ENCODE measurements at regions of chr10 and their contacts with region 1.

Region 1: DNA sequence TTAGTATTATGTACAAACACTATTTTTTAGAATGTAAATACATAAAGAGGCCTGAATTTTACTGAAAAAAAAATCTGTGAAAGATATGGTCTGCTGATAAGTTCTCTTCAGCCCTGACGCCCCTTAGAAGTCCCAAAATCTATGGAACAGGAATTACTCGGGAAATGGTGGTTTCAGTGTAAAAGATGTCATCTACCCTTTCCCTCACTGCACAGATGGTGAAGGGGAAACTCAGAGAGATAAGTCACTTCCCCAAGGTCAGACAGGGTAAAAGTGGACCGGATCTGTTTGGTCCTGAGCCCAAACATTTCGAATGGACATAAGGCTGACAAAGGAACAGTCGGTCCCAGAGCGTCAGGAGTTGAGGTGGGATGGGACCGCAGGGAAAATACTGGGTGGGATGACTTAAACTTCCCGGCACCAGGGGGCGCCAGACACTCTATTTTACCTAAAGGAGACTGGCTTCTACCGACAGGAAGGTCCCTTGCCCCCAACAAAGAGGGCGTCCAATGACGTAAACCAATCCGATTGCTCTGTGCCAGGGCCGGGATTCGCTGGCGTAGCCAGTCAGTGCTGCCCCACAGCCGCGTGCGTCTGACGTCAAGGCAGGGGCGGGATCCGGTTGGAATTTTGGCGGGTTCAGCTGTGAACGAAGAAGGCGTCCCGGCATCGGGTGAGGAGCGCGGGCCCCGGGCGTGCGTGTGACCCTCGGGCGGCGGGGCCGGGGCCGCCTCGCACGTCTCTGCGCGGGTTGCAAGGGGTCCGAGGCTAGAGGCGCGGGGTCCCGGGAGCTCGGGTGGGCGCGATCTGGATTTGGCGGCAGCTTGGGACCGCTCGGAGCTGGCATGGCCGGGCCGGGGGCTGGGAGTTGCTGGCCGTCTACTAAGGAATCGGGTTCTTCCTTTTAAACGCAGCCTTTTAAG is at the start of gene MCM10:
- DNase-seq: peak; percentile 92 to 99 (median 97)
- ATAC-seq: peak; percentile 100
- H3K4me3 ChIP-seq: peak within 1 kb of the TSS; percentile 41 to 42
- H3K4me3 Mint-ChIP-seq: peak within 1 kb of the TSS; percentile 79 to 85 (median 82)
- H3K27ac ChIP-seq: peak within 1 kb of the TSS; percentile 44
- H3K27ac Mint-ChIP-seq: peak within 1 kb of the TSS; percentile 17 to 41
- H3K4me1 ChIP-seq: peaks cover 0 to 14% of the 10 kb centered on the region in 2 experiments
- H3K4me1 Mint-ChIP-seq: peaks cover 16 to 33% (median 22%) of the 10 kb centered on the region in 3 donors
- H3K27me3 ChIP-seq: peaks cover 0 to 3% of the 10 kb centered on the region in 2 experiments
- H3K27me3 Mint-ChIP-seq: no peaks in the 10 kb centered on the region
- total RNA-seq, gene MCM10: 0.65 to 1.4 (median 0.82) TPM

Region 2: DNA sequence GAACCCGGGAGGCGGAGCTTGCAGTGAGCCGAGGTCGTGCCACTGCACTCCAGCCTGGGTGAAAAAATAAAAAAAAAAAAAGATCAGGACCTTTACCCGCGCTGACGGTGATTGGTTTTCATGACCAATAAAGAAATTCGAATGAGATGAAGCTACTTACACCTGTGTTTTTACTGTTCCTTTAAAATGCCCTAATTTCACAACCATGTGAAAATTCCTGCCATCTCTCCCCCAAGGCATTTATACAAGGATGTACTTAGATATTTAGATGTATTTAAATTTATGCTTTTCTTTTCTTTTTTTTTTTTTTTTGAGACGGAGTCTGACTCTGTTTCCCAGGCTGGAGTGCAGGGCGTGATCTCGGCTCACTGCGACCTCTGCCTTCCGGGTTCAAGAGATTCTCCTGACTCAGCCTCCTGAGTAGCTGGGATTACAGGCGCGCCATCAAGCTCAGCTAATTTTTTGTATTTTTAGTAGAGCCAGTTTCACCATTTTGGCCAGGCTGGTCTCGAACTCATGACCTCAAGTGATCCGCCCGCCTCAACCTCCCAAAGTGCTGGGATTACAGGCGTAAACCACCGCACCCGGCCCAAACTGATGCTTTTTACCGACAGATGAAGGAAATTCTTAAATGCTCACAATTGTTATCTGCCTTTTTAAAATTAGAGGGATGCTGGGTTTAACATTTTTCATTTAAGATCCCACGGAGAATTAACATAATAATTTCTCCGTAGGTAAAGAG is 141.8 kb after region 1 on chr10:
- CTCF ChIA-PET with region 1: interaction called in 1 of 2 experiments, 33 read pairs
- POLR2A ChIA-PET with region 1: interaction called, 3 read pairs
- DNase-seq: peak in 1 of 35 experiments; percentile 16
- ATAC-seq: no peak
- H3K4me3 ChIP-seq: peak overlapping the region in 1 of 2 donors; percentile 75
- H3K4me3 Mint-ChIP-seq: peak overlapping the region; percentile 86 to 89 (median 88)
- H3K27ac ChIP-seq: peak overlapping the region; percentile 100
- H3K27ac Mint-ChIP-seq: peak overlapping the region; percentile 98 to 99
- H3K4me1 ChIP-seq: peaks cover 6 to 28% of the 10 kb centered on the region in 2 experiments
- H3K4me1 Mint-ChIP-seq: peaks cover 22 to 30% (median 29%) of the 10 kb centered on the region in 3 donors
- H3K27me3 ChIP-seq: no peaks in the 10 kb centered on the region
- H3K27me3 Mint-ChIP-seq: no peaks in the 10 kb centered on the region

Measured in T-cell (primary cell).